Activated B cell treated with CpG ODN at 0.5 μM for 24 hours (primary cell): ENCODE measurements at regions of chr6 and their contacts with region 1.

Region 1: GRCh38 chr6:111721753-111722154 is 116.1 kb upstream of the TRAF3IP2 start:
- DNase-seq: no peak
- ATAC-seq: peak; percentile 43
- H3K4me3 Mint-ChIP-seq: no peak overlapping the region
- H3K27ac Mint-ChIP-seq: peak overlapping the region; percentile 7
- H3K4me1 Mint-ChIP-seq: peaks cover 45% of the 10 kb centered on the region
- H3K27me3 Mint-ChIP-seq: no peaks in the 10 kb centered on the region
- CTCF ChIP-seq: no peak

Region 2: GRCh38 chr6:111482959-111483735 is 238.6 kb before region 1 on chr6 and contains the start of gene REV3L:
- CTCF ChIA-PET with region 1: no interaction called
- POLR2A ChIA-PET with region 1: no interaction called
- intact Hi-C with region 1: no loop called
- DNase-seq: peak; percentile 88
- ATAC-seq: peak; percentile 51
- H3K4me3 Mint-ChIP-seq: peak within 1 kb of the TSS; percentile 97
- H3K27ac Mint-ChIP-seq: peak within 1 kb of the TSS; percentile 99
- H3K4me1 Mint-ChIP-seq: peaks cover 39% of the 10 kb centered on the region
- H3K27me3 Mint-ChIP-seq: no peaks in the 10 kb centered on the region
- CTCF ChIP-seq: no peak
- total RNA-seq, gene REV3L: 20.0 and 25.3 TPM in 2 replicates

Region 3: DNA sequence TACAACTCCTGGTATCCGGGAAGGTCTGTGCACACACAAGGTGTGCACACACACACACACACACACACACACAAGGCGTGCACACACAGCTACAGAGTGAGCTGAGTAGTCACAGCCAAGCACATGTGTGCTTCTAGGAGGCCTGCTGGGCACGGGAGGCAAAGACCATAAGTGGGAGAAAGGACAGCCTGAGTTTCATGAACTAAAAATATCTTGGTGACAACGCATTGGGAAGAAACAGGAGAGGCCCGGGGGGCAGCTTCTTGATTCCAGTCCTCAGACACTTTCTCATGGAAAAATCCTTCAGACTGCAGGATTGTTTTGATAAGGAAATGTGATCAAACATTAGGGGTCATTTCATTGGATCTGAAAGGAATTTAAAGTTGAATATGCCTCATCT is 118.7 kb before region 1 on chr6:
- CTCF ChIA-PET with region 1: no interaction called
- POLR2A ChIA-PET with region 1: no interaction called
- intact Hi-C with region 1: no loop called
- DNase-seq: no peak
- ATAC-seq: no peak
- H3K4me3 Mint-ChIP-seq: no peak overlapping the region
- H3K27ac Mint-ChIP-seq: no peak overlapping the region
- H3K4me1 Mint-ChIP-seq: peaks cover 57% of the 10 kb centered on the region
- H3K27me3 Mint-ChIP-seq: no peaks in the 10 kb centered on the region
- CTCF ChIP-seq: no peak

Region 4: DNA sequence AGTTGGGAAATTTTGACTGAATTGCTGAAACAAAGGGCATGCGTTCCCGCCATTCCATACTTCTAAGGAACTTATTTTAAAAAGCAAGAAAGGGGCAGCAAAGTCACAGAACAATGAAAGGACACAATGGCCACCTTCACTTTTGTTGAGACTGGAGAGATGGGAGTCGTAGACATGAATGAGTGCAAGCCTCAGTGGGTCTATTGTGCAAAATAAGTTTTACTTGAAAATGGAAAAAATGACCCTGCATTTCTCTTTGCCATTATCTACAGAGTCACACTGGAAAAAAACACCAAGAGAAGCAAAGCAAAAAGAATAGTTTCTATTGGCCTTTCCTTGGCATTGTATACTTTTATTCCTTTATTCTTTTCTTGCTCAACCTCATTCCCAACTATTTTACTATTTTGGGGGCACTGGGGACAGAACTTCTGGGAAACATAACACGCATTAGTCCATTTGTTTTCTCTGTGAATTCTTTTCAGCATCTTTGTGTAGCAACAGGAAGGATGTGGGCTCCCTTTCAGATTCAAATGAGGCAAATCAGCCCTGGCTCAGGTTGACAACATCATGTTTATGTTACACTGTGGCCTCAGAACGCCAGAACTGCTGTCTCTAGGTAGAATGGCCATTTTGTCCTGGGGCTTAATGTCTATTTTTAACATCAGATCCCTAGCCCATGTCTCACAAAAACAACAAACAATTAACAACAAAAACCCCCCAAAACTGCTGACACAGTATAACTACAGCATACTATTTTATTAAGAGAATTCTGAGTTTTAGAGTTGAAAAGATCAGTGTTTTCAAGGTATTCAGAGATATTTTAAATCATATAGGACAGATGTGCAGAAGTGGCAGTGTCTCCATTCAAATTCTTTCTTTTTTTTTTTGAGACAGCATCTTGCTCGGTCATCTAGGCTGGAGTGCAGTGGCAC is 29.3 kb after region 1 on chr6:
- CTCF ChIA-PET with region 1: no interaction called
- POLR2A ChIA-PET with region 1: interaction called, 3 read pairs
- intact Hi-C with region 1: loop called (anchors 2 kb)
- DNase-seq: no peak
- ATAC-seq: peak; percentile 42
- H3K4me3 Mint-ChIP-seq: peak overlapping the region; percentile 51
- H3K27ac Mint-ChIP-seq: peak overlapping the region; percentile 75
- H3K4me1 Mint-ChIP-seq: peaks cover 74% of the 10 kb centered on the region
- H3K27me3 Mint-ChIP-seq: no peaks in the 10 kb centered on the region
- CTCF ChIP-seq: no peak

Region 5: DNA sequence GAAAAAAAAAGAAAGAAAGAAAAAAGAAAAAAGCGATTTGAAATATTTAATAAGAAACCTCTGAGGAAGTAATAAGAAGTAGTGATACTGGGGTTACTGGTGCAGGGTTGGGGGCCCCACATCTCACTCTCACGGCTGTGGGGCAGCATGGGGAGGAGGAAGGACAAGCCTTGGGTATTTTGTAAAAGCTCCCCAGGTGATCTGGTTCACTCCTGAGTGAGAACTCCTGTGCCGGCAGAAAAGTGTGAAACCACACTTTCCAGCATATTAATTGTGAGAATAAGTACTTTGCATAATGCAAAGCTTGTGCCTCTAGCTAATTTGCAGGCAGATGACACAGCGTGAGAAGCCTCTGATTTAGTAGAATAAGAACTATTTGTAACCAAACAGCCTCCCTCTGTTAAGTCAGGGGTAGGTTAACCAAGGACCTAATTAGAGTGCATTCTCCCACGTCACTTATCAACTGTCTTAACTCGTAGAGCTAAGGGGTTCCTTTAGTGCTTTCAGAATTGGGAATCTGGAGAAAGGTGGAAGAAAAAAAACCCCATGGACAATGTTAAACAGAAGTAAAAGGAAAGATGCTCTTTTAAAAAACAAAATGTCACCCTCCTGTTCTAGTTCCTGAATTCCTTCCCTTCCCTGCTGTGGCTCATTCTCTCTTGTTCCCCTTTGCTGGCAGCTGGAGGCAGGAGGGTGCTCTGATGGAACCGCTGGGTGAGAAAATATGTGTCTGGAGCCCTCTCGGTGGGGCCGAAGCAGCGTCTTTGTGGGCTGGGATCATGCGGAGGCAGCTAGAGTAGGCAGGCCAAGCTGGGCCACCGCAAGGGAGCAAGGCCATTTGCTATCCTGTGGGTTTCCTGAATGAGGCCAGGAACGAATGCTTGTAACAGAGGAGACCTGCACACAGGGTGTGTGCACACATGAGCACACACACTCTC is 42.8 kb after region 1 on chr6:
- CTCF ChIA-PET with region 1: no interaction called
- POLR2A ChIA-PET with region 1: no interaction called
- intact Hi-C with region 1: loop called (anchors 1 kb)
- DNase-seq: no peak
- ATAC-seq: peak; percentile 82
- H3K4me3 Mint-ChIP-seq: peak overlapping the region; percentile 61
- H3K27ac Mint-ChIP-seq: peak overlapping the region; percentile 81
- H3K4me1 Mint-ChIP-seq: peaks cover 94% of the 10 kb centered on the region
- H3K27me3 Mint-ChIP-seq: no peaks in the 10 kb centered on the region
- CTCF ChIP-seq: no peak

Region 6: DNA sequence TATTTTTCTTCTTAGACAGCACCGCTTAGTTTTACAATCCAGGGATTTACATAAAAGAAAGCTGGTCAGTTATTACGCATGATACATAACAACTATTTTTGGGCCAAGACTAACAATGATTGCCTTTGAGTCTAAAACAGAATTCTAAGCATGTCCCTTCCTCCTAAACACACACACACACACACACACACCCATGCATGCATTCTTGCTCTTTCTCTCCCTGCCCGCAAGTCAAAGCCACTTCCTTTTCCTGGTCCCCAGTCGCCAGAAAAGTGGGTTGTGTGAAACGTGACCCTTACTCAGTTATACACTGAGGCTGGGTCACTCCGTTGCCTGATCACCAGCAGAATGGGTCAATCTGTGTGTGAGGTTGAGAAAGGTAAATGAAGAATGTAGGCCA is 120.1 kb after region 1 on chr6:
- CTCF ChIA-PET with region 1: no interaction called
- POLR2A ChIA-PET with region 1: no interaction called
- intact Hi-C with region 1: loop called (anchors 1 kb)
- DNase-seq: no peak
- ATAC-seq: no peak
- H3K4me3 Mint-ChIP-seq: no peak overlapping the region
- H3K27ac Mint-ChIP-seq: no peak overlapping the region
- H3K4me1 Mint-ChIP-seq: peaks cover 24% of the 10 kb centered on the region
- H3K27me3 Mint-ChIP-seq: no peaks in the 10 kb centered on the region
- CTCF ChIP-seq: no peak

Region 7: DNA sequence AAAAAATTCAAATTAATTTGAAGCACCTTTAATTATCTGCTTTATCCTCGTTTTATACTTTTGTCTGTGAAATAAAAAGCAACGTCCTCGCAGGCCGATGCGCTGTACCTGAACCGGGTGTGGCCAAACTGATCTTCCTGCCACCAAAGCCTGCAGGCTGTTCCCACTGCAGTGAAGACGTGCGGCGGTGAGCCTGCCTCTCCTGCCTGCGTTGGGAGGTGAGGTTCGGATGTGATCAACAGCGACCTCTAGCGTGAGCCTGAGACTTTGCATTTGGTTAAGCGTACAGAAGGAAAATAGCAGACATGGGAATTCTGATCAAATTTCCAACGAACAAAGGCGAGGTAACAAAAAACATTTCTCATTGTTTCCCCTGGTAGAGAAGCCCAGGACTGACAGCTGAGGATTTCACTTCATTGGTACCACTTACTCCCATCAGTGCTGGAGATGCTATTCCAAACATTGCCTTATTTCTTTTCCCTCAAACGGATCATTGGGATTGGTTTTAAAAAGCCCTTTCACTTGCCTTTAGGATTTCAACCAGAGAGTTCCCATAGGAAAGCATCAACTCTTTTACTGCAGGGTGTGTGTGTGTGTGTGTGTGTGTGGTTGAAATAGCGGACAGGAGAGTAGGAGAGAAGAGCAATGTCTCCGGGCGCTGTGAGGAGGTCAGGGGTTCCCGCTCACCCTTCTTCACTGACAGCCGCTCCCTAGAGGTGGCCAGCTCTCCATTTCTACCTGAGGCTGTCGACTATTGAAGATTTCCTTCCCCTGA is 275.5 kb after region 1 on chr6:
- CTCF ChIA-PET with region 1: interaction called, 6 read pairs
- POLR2A ChIA-PET with region 1: no interaction called
- intact Hi-C with region 1: loop called (anchors 1 kb)
- DNase-seq: peak; percentile 49
- ATAC-seq: peak; percentile 90
- H3K4me3 Mint-ChIP-seq: peak overlapping the region; percentile 42
- H3K27ac Mint-ChIP-seq: no peak overlapping the region
- H3K4me1 Mint-ChIP-seq: peaks cover 6% of the 10 kb centered on the region
- H3K27me3 Mint-ChIP-seq: peaks cover 2% of the 10 kb centered on the region
- CTCF ChIP-seq: no peak